Dendritic cell treated with granulocyte-macrophage colony-stimulating factor and Interleukin-4, amounts not matched to agents 40 ng/mL and 50 ng/mL, for 4 days (primary cell): ENCODE measurements at regions of chr5 and their contacts with region 1.

Region 1: DNA sequence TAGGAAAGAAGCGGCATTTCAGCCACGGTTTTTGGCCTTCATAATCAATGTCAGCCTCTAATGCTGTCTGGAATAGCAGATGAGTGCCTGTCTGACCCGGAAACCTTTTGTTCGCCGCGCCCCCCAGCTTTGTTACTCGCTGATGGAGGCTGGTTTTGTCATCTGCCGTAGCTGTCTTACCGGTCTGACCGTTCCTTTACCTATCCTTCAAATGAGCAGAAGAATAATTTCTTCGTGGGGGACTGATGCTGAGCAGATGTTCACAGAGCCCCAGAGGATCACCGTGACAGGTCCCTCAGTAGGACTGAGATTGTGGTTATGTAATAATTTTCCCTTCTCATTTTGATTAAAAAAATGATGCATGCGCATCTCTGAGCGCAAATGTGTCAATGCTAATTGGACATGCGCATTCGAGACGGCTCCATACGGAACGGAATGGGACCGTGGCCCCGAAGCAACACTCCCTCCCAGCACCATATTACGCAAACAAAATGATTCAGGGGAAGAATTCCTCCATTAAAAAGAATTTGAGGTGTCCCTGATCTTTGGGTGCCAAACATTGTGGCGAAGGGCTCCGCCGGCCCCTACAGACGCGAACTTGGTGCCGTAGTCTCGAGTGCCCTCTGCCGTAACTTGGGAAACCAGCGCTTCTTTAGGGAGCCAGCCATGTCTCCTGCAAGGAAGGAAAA is 27.6 kb downstream of the TLX3 start:
- H3K4me3 Mint-ChIP-seq: peak overlapping the region; percentile 62
- H3K27ac Mint-ChIP-seq: no peak overlapping the region
- H3K4me1 Mint-ChIP-seq: peaks cover 6% of the 10 kb centered on the region
- H3K27me3 Mint-ChIP-seq: peaks cover 61% of the 10 kb centered on the region

Region 2: GRCh38 chr5:171207256-171207847 is 129.3 kb before region 1 on chr5:
- intact Hi-C with region 1: loop called (anchors 1 kb)
- H3K4me3 Mint-ChIP-seq: no peak overlapping the region
- H3K27ac Mint-ChIP-seq: no peak overlapping the region
- H3K4me1 Mint-ChIP-seq: no peaks in the 10 kb centered on the region
- H3K27me3 Mint-ChIP-seq: no peaks in the 10 kb centered on the region

Region 3: DNA sequence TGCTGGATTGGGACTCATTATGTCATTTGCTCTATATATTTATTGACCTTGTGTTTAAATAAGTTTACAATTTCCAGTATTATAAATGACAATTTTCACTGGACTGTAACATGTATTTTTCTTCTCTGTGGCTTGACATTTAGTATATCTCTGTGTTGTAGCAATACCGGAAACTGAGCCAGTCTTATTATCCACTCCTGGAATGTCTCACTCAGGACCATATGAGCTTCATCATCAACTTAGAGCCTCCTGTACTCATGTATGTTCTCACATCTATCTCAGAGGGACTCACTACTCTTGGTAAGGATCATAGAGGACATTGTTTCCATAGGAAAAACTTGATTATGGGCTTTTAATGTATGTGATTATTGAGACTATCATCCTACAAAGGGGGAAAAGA is 94.1 kb before region 1 on chr5:
- intact Hi-C with region 1: no loop called
- H3K4me3 Mint-ChIP-seq: no peak overlapping the region
- H3K27ac Mint-ChIP-seq: no peak overlapping the region
- H3K4me1 Mint-ChIP-seq: no peaks in the 10 kb centered on the region
- H3K27me3 Mint-ChIP-seq: no peaks in the 10 kb centered on the region

Region 4: GRCh38 chr5:171272996-171273970 is 63.4 kb before region 1 on chr5:
- intact Hi-C with region 1: loop called (anchors 1 kb)
- H3K4me3 Mint-ChIP-seq: no peak overlapping the region
- H3K27ac Mint-ChIP-seq: no peak overlapping the region
- H3K4me1 Mint-ChIP-seq: no peaks in the 10 kb centered on the region
- H3K27me3 Mint-ChIP-seq: no peaks in the 10 kb centered on the region

Region 5: GRCh38 chr5:171379961-171380360 is 43.3 kb after region 1 on chr5:
- intact Hi-C with region 1: no loop called
- H3K4me3 Mint-ChIP-seq: no peak overlapping the region
- H3K27ac Mint-ChIP-seq: no peak overlapping the region
- H3K4me1 Mint-ChIP-seq: no peaks in the 10 kb centered on the region
- H3K27me3 Mint-ChIP-seq: peaks cover 10% of the 10 kb centered on the region

Region 6: GRCh38 chr5:171397190-171397589 is 60.5 kb after region 1 on chr5:
- intact Hi-C with region 1: no loop called
- H3K4me3 Mint-ChIP-seq: no peak overlapping the region
- H3K27ac Mint-ChIP-seq: no peak overlapping the region
- H3K4me1 Mint-ChIP-seq: peaks cover 28% of the 10 kb centered on the region
- H3K27me3 Mint-ChIP-seq: no peaks in the 10 kb centered on the region

Region 7: GRCh38 chr5:171931163-171931562 is 594.5 kb after region 1 on chr5:
- intact Hi-C with region 1: no loop called
- H3K4me3 Mint-ChIP-seq: no peak overlapping the region
- H3K27ac Mint-ChIP-seq: no peak overlapping the region
- H3K4me1 Mint-ChIP-seq: peaks cover 13% of the 10 kb centered on the region
- H3K27me3 Mint-ChIP-seq: no peaks in the 10 kb centered on the region